Cardiac septum (tissue), 1 donor: ENCODE measurements at regions of chr1 and their contacts with region 1.

Region 1: DNA sequence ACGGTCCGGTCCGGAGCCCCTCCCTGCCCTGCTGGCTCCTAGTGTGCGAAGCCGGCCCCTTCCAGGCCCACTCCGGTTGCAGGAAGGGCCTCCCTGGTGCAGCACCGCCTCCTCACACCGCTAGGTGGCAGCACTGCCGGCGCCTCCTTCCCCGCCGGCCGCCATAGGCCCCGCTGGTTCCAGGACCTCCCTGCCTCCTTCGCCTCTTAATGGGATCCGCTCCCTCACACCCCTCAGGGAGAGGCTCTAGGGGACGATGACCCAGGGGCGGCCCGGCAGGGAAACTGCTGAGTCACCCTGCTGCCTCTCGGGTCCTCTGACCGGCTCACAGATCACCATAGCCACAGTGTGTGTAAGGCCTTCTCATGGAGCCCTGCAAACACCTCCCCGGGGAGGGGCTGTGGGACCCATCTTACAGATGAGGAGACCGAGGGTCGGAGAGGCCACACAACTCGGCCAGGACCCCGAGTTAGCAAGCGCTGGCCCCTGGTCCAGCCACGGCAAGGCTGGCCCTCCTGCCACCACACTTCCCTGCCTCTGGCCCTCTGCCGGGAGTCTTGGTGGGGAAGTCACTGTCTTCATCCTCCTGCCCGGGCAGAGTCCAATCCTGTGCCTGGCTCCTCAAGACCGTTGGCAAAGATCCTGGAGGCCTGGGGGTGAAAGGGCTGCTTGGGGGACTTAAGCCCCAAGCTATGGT is 1.6 kb upstream of the AJAP1 start:
- DNase-seq: no peak

Region 2: DNA sequence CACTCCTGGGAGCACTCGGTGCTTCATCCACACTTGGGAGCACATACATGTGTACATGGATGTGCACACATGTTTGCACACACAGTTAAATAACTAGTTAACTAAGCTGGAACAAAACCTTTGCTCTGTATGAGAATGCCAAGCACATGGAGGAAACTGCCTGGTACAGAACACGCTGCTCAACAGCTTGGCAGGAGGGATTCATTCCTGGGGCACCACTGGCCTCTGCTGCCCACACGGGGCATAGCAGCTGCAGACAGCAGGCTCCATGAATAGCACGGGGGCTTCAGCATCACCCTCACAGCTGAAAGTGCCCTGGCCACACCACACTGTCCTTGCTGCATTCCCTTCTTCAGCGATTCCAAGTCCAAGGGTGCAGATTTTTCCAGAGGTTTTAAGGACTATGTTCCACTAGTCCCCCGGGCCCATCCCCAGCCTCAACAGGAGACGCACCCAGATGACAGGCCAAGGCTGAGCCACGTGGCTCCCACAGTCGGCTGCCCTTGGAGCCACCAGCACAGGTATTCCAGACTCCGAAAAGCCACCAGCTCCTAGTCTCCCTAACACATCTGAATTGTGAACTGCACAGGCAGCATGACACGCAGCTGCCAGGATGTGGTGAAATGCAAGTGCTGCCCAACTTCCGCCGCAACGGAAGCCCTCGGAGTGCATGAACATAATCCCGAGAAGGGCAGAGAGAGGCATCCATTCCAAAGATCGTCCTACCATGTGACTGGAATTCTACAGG is 1322.5 kb after region 1 on chr1:
- intact Hi-C with region 1: loop called (anchors 10 kb)
- DNase-seq: peak; percentile 86